ENCODE measurements at regions of chr5 and their contacts with region 1.

Region 1: DNA sequence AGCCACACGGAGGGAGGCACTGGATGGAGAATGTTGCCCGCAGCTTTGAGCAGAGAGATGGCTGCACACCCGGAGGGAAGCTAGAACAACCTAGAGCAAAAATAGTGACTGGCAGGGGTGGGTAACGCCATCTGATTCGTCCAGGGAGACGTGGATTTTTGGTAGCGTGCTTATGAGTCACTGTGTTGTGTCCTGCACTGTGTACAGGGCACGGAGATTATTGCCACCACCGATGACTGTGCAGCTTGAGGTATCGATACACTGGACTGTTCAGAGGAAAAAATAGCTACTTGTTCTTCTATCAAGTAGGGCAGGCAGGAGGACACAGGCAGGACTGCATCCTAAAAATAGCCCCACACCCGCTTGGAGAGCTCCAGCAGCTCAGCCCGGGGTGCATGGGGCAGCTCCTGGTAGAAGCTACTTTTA is 6.0 kb downstream of the UBE2QL1 start:
- DNase-seq: no peak
- ATAC-seq: peak; percentile 90

Region 2: DNA sequence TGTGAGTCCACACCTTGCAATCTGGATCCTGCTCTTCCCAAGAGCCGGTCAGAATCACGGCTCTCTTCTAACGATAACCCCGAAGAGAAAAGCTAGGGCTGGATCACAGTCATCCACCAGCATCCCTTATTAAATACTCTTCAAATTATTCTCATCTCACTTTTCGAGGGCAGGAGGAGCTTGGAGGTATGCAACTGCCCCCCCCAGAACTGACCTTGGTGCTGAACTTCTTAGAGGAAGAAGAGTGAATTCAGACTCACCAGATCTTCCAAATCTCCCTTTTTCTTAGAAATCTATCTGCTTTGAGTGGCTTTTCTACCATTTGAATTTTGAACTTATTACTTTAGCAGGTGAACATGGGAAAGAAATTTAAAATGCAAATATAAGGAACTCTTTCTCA is 152.0 kb before region 1 on chr5:
- intact Hi-C with region 1: no loop called
- DNase-seq: no peak
- ATAC-seq: no peak

Region 3: DNA sequence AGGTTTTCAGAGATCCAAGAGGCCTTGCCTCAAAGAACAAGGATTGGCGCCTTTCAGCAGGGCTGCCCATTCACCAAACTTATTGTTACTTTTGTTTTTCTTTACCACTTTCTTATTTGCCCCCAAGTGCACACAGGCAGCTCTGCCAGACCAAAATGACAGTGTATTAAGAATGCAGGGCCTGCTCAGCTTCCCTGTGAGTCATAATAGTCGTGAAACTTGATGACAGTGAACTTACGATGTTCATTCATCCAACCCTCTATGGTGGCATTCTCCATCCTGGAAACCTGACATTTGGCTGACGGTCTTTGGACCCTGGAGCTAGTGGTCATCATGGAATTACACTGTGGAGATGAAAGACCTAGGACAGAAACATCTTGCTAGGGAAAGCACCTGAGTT is 38.3 kb after region 1 on chr5:
- intact Hi-C with region 1: no loop called
- DNase-seq: no peak
- ATAC-seq: no peak

Region 4: GRCh38 chr5:6510132-6510531 is 55.5 kb after region 1 on chr5:
- intact Hi-C with region 1: loop called (anchors 1 kb)
- DNase-seq: no peak
- ATAC-seq: no peak

Region 5: DNA sequence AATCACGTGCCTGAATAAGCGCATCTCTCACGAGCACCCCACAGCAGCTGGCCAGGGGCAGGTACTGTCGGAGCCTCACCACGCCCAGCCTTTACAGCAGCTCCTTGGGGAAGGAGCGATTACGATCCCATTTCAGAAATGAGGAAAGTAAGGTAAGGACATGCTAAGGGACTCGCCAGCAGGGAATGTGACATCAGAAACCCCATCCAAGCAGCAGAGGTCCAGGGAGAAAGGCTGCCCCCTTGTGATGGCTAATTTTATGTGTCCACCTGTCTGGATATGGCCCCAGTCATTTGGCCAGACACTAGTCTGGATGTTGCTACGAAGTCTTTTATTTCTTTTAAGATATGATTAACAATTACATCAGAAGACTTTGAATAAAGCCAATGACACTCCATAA is 71.3 kb after region 1 on chr5:
- intact Hi-C with region 1: no loop called
- DNase-seq: no peak
- ATAC-seq: peak; percentile 61